ENCODE measurements at regions of chr11 and their contacts with region 1.

Region 1: GRCh38 chr11:65117216-65118096 is at the start of gene ZNHIT2:
- DNase-seq: peak; percentile 100
- H3K4me3 Mint-ChIP-seq: peak within 1 kb of the TSS; percentile 90
- H3K27ac Mint-ChIP-seq: peak within 1 kb of the TSS; percentile 93
- H3K4me1 Mint-ChIP-seq: peaks cover 52% of the 10 kb centered on the region
- H3K27me3 Mint-ChIP-seq: no peaks in the 10 kb centered on the region
- total RNA-seq, gene ZNHIT2: 20.8 and 22.1 TPM in 2 replicates

Region 2: GRCh38 chr11:64846998-64847666 is 270.3 kb before region 1 on chr11:
- intact Hi-C with region 1: loop called (anchors 1 kb)
- DNase-seq: peak; percentile 83
- H3K4me3 Mint-ChIP-seq: no peak overlapping the region
- H3K27ac Mint-ChIP-seq: no peak overlapping the region
- H3K4me1 Mint-ChIP-seq: peaks cover 32% of the 10 kb centered on the region
- H3K27me3 Mint-ChIP-seq: peaks cover 2% of the 10 kb centered on the region

Region 3: DNA sequence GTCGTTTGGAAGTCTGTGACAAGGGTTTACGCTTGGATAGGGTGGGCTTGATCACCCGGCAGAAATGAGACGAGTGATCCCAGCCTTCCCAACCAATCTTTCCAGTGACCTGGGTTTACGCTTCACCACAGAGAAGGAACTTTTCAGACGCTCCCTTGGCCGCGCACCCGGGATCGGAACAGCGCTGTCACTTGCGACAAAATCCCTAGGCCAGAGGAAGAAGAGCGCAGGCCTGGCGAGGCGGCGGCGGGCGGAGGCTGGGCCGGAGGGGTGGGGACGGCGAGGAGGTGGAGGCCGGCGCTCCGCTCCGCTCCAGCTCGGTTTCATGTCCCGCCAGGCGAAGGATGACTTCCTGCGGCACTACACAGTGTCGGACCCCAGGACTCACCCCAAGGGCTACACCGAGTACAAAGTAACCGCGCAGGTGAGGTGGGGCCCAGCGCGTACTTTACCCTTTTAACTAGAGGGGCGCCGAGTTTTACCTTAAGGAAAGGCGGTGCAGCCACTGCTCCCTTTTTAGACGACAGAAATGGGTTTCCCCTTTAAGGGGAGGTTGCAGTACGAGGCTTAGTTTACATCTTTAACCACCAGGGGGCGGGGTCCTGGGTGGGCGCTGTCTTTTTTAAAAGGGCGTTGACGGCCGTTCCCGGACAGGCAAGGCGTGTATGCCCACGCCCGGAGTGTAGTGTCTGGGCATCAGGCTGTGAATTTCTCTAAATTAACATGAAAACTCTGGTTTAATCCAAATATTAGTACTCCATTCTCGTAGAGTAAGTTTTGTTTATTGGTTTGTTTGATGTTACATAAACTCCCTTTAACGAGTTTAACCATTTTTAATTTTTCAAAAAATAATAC is 90.0 kb before region 1 on chr11 and contains the start of gene SNX15:
- intact Hi-C with region 1: loop called (anchors 1 kb)
- DNase-seq: peak; percentile 91
- H3K4me3 Mint-ChIP-seq: peak within 1 kb of the TSS; percentile 83
- H3K27ac Mint-ChIP-seq: peak within 1 kb of the TSS; percentile 83
- H3K4me1 Mint-ChIP-seq: peaks cover 23% of the 10 kb centered on the region
- H3K27me3 Mint-ChIP-seq: no peaks in the 10 kb centered on the region
- total RNA-seq, gene SNX15: 19.9 and 30.9 TPM in 2 replicates

Region 4: GRCh38 chr11:65083834-65084597 is 33.4 kb before region 1 on chr11 and contains the starts of genes CDCA5 and ZFPL1:
- intact Hi-C with region 1: loop called (anchors 1 kb)
- DNase-seq: peak; percentile 96
- H3K4me3 Mint-ChIP-seq: peak within 1 kb of the TSS; percentile 98
- H3K27ac Mint-ChIP-seq: peak within 1 kb of the TSS; percentile 97
- H3K4me1 Mint-ChIP-seq: peaks cover 59% of the 10 kb centered on the region
- H3K27me3 Mint-ChIP-seq: no peaks in the 10 kb centered on the region
- total RNA-seq, gene CDCA5: 91.8 and 92.5 TPM in 2 replicates
- total RNA-seq, gene ZFPL1: 31.9 and 34.5 TPM in 2 replicates

Region 5: GRCh38 chr11:65134386-65135253 is 17.2 kb after region 1 on chr11 and contains the start of gene SYVN1:
- intact Hi-C with region 1: loop called (anchors 1 kb)
- DNase-seq: peak; percentile 91
- H3K4me3 Mint-ChIP-seq: peak within 1 kb of the TSS; percentile 97
- H3K27ac Mint-ChIP-seq: peak within 1 kb of the TSS; percentile 97
- H3K4me1 Mint-ChIP-seq: peaks cover 32% of the 10 kb centered on the region
- H3K27me3 Mint-ChIP-seq: no peaks in the 10 kb centered on the region
- total RNA-seq, gene SYVN1: 42.3 and 45.8 TPM in 2 replicates

Measured in activated T-helper 1 cell treated with anti-CD3 and anti-CD28 coated beads, Interleukin-12 subunit alpha, Interleukin-12 subunit beta, Interleukin-2, Interleukin-4 antibody, amounts not matched to agents 30 ng/mL and 10 ng/mL and 1 ng/mL, durations not matched to agents 14 hours and 24 hours and 36 hours (primary cell).